Common myeloid progenitor, CD34-positive (primary cell): ENCODE measurements at regions of chr19 and their contacts with region 1.

Region 1: GRCh38 chr19:970695-971094 is 13.4 kb upstream of the WDR18 start:
- DNase-seq: peak in 2 of 3 donors; percentile 51 to 58
- H3K4me3 ChIP-seq: no peak overlapping the region
- H3K27ac ChIP-seq: no peak overlapping the region
- H3K4me1 ChIP-seq: no peaks in the 10 kb centered on the region
- H3K27me3 ChIP-seq: no peaks in the 10 kb centered on the region

Region 2: GRCh38 chr19:850221-850978 is 120.3 kb before region 1 on chr19:
- CTCF ChIA-PET with region 1: no interaction called
- POLR2A ChIA-PET with region 1: no interaction called
- DNase-seq: peak in 2 of 3 donors; percentile 53 to 58
- H3K4me3 ChIP-seq: no peak overlapping the region
- H3K27ac ChIP-seq: no peak overlapping the region
- H3K4me1 ChIP-seq: peaks cover 0 to 6% (median 4%) of the 10 kb centered on the region in 4 experiments
- H3K27me3 ChIP-seq: peaks cover 3 to 73% (median 10%) of the 10 kb centered on the region in 5 experiments

Region 3: GRCh38 chr19:984165-984967 is 13.7 kb after region 1 on chr19 and contains the start of gene WDR18:
- CTCF ChIA-PET with region 1: interaction called, 10 read pairs
- POLR2A ChIA-PET with region 1: no interaction called
- DNase-seq: peak; percentile 86 to 92 (median 90)
- H3K4me3 ChIP-seq: peak within 1 kb of the TSS; percentile 76 to 98 (median 93)
- H3K27ac ChIP-seq: peak within 1 kb of the TSS; percentile 74 to 87
- H3K4me1 ChIP-seq: peaks cover 0 to 33% (median 19%) of the 10 kb centered on the region in 4 experiments
- H3K27me3 ChIP-seq: no peaks in the 10 kb centered on the region

Region 4: GRCh38 chr19:995051-995827 is 24.5 kb after region 1 on chr19:
- CTCF ChIA-PET with region 1: no interaction called
- POLR2A ChIA-PET with region 1: no interaction called
- DNase-seq: no peak
- H3K4me3 ChIP-seq: no peak overlapping the region
- H3K27ac ChIP-seq: no peak overlapping the region
- H3K4me1 ChIP-seq: peaks cover 0 to 12% (median 10%) of the 10 kb centered on the region in 4 experiments
- H3K27me3 ChIP-seq: peaks cover 0 to 42% (median 18%) of the 10 kb centered on the region in 5 experiments

Region 5: GRCh38 chr19:1074544-1075283 is 104.0 kb after region 1 on chr19:
- CTCF ChIA-PET with region 1: no interaction called
- POLR2A ChIA-PET with region 1: no interaction called
- DNase-seq: peak; percentile 86 to 93 (median 91)
- H3K4me3 ChIP-seq: peak overlapping the region in 2 of 7 experiments; percentile 19 to 57
- H3K27ac ChIP-seq: no peak overlapping the region
- H3K4me1 ChIP-seq: peaks cover 10 to 55% (median 52%) of the 10 kb centered on the region in 4 experiments
- H3K27me3 ChIP-seq: no peaks in the 10 kb centered on the region